Activated B cell treated with CpG ODN at 0.5 μM for 24 hours (primary cell): ENCODE measurements at regions of chr9 and their contacts with region 1.

Region 1: DNA sequence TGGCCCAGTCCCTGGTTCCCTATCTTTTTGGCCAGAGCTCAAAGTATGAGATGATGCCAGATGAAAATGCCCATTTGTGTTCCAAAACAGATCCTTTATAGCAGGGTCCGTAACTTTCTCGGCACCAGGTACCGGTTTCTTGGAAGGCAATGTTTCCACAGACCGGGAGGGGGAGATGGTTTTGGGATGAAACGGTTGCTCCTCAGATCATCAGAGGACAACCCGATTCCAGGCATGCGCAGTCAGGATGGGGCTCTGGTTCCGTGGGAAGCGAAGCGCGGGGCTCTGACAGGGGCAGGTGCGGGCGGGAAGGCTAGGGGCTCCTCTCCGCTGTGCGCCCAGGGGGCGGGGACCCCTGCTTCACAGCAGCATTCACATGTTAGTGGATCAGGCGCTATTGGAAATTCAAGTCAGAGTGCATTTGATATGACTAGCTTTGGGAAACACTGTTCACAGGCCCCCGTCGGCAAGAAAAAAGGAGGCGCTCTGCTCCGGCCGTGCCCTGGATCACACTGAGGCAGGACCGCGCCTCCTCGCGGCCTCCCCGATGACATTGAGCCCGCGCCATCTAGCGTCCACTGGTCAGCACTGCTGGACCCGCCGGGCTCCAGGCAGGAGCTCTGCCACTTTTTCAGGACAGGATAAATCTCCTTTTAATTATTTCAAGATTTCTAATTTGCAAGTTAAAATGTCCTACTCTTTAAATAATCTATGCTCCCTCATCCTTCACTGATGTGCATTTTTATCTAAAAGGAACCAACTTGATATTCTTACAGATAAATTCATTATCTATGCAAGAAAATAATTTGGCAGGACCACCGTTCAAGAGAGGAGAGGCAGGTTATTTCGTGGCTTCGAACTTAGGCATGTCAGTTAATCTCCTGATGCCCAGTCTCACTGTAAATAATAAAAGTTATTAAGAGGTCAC is 190.0 kb downstream of the FANCC start:
- DNase-seq: peak; percentile 48
- ATAC-seq: peak; percentile 86
- H3K4me3 Mint-ChIP-seq: no peak overlapping the region
- H3K27ac Mint-ChIP-seq: no peak overlapping the region
- H3K4me1 Mint-ChIP-seq: peaks cover 4% of the 10 kb centered on the region
- H3K27me3 Mint-ChIP-seq: no peaks in the 10 kb centered on the region
- CTCF ChIP-seq: peak; percentile 21

Region 2: GRCh38 chr9:94554439-94555391 is 572.8 kb before region 1 on chr9 and contains the start of gene PCAT7:
- CTCF ChIA-PET with region 1: no interaction called
- POLR2A ChIA-PET with region 1: no interaction called
- intact Hi-C with region 1: loop called (anchors 10 kb)
- DNase-seq: no peak
- ATAC-seq: peak; percentile 47
- H3K4me3 Mint-ChIP-seq: no peak within 1 kb of the TSS
- H3K27ac Mint-ChIP-seq: no peak within 1 kb of the TSS
- H3K4me1 Mint-ChIP-seq: no peaks in the 10 kb centered on the region
- H3K27me3 Mint-ChIP-seq: peaks cover 7% of the 10 kb centered on the region
- CTCF ChIP-seq: no peak
- total RNA-seq, gene PCAT7: not detected in 2 replicates

Region 3: GRCh38 chr9:94668418-94668932 is 459.0 kb before region 1 on chr9:
- CTCF ChIA-PET with region 1: interaction called, 17 read pairs
- POLR2A ChIA-PET with region 1: no interaction called
- intact Hi-C with region 1: loop called (anchors 5 kb)
- DNase-seq: no peak
- ATAC-seq: no peak
- H3K4me3 Mint-ChIP-seq: no peak overlapping the region
- H3K27ac Mint-ChIP-seq: no peak overlapping the region
- H3K4me1 Mint-ChIP-seq: peaks cover 2% of the 10 kb centered on the region
- H3K27me3 Mint-ChIP-seq: peaks cover 6% of the 10 kb centered on the region
- CTCF ChIP-seq: no peak

Region 4: DNA sequence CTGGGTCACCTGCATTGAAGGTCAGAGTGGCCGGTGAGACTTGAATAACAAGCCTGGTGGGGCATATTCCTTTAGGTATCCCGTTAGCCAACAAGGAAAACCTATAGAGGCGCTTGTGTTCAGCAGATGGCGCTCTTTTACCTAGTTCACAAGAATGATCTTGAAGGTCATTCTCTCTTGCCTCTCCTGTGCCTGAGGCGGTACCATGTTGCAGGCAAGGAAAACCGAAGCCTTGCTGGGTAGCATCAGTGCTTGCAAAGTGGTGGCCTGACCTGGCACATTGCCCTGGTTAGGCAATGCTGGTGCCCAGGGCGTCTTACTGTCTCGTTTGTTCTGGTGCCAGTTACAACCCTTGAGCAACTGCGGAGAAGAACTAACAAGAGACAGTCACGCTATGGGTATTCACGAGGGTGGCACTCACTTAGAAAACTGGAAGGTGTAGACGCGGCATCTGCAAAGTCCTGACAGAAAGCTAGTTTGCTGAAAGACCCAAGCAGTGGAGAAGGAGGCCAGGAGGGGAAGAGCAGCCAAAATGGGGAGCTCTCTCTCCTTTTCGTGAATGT is 344.3 kb before region 1 on chr9:
- CTCF ChIA-PET with region 1: interaction called, 10 read pairs
- POLR2A ChIA-PET with region 1: no interaction called
- intact Hi-C with region 1: loop called (anchors 1 kb)
- DNase-seq: no peak
- ATAC-seq: no peak
- H3K4me3 Mint-ChIP-seq: no peak overlapping the region
- H3K27ac Mint-ChIP-seq: no peak overlapping the region
- H3K4me1 Mint-ChIP-seq: peaks cover 7% of the 10 kb centered on the region
- H3K27me3 Mint-ChIP-seq: no peaks in the 10 kb centered on the region
- CTCF ChIP-seq: no peak

Region 5: DNA sequence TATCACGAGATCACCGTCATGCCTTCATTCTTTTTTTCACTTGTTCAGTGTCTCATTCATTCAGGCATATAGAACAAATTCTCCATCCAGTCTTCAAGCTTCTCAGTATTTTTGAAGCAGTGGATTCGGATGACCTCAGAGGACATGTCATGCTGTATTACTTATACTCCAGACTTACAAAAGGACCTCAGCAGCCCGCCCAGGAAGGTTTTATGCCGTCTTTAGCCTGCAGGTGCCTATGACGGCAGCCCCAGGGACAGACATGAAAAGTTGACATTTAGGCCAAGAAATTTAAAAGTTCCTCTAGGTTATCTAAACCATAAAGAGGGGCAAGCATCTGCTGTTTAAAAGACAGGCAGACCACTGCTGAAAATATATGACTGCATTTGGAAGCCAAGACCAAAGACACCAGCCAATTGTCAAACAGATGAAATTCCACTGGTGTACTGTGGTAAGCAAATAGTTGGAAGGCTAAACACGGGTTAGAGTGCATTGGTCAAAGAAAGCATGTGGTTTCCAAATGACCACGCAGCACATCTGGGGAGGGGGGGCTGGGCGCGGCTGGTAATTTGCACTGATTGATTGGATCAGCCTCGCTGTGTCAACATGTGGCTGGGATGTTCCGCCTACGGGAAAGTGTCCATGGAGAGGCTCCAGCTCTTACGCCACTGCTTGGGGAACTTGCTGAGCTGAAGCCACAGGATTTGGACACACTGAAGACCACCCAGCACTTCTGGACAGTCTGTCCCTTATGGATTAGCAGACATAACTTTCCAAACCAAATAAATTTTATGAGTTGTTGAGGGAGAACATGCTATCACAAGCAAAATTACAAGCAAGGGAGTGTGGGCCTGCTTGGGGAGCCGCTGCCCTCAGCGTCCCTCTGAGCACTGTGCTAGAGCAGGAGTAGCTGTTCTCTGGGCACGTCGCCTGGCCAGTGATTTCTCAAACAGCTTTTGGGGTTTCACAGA is 16.4 kb after region 1 on chr9:
- CTCF ChIA-PET with region 1: interaction called, 11 read pairs
- POLR2A ChIA-PET with region 1: no interaction called
- intact Hi-C with region 1: no loop called
- DNase-seq: no peak
- ATAC-seq: no peak
- H3K4me3 Mint-ChIP-seq: no peak overlapping the region
- H3K27ac Mint-ChIP-seq: no peak overlapping the region
- H3K4me1 Mint-ChIP-seq: no peaks in the 10 kb centered on the region
- H3K27me3 Mint-ChIP-seq: no peaks in the 10 kb centered on the region
- CTCF ChIP-seq: no peak